Psoas muscle (tissue), 8 donors: ENCODE measurements at regions of chr11 and their contacts with region 1.

Region 1: DNA sequence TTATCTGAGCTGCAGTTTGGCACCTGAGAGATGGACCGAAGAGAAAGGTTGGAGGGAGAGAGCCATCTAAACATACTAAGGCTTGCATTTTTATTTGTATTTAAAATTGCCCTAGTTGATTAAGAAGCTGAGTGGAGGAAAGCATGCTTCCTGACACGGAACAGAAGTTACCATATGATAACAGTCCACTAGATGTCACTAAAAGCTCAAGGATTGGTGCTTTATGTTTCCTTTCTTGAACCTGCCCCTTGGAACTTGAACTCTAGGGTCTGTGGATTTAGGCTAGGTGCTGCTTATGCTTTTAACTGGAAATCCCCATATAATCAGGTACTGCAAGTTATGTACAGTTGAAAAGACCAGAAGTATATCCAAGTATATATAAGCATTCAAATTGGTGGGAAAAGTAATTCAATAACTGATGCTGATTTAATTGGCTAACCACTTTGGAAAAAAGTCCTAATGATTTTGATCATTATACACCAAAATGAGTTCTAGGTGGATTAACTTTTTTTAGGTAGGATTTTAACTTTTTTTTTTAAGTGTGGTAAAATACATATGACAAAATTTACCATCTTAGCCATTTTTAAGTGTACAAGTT is 9.5 kb downstream of the RBMXL2 start:
- DNase-seq: no peak
- ATAC-seq: peak; percentile 51 to 83 (median 58)
- H3K4me3 ChIP-seq: no peak overlapping the region
- H3K27ac ChIP-seq: no peak overlapping the region
- H3K4me1 ChIP-seq: no peaks in the 10 kb centered on the region
- H3K27me3 ChIP-seq: peaks cover 0 to 3% (median 0%) of the 10 kb centered on the region in 3 donors
- CTCF ChIP-seq: peak; percentile 62

Region 2: GRCh38 chr11:7292922-7293321 is 194.6 kb after region 1 on chr11:
- intact Hi-C with region 1: no loop called
- DNase-seq: no peak
- ATAC-seq: no peak
- H3K4me3 ChIP-seq: no peak overlapping the region
- H3K27ac ChIP-seq: no peak overlapping the region
- H3K4me1 ChIP-seq: no peaks in the 10 kb centered on the region
- H3K27me3 ChIP-seq: peaks cover 0 to 2% (median 0%) of the 10 kb centered on the region in 3 donors
- CTCF ChIP-seq: no peak

Region 3: DNA sequence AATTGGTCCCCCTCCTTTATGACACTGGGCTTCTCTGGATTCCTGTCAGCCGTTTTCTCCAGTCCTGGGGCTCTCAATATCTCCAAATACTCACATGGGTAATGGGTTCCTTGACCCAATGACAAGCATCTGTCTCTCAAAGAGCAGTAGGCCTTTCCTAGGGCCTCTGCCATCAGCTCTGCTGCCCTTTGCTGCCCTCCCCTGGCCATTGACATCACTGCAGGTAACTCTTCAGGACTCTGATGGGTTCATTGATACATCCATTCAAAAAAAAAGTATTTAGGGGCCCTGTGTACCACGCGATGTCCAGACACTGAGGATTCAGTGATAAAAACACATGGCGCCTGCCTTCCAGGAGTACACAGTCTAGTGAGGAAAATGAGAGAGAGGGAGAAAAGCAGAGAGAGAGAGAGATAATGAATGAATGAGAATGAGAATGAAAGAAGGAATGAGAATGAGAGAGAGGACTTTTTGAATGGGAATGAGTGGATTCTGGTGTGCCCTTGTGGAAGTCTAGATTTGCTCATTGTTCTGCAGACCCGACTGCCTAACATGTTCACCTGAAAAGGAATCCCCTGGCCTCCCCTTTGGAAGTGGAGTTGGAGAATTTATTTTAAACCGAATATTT is 344.4 kb after region 1 on chr11:
- intact Hi-C with region 1: loop called (anchors 2 to 5 kb)
- DNase-seq: peak; percentile 67 to 81
- ATAC-seq: peak in 3 of 4 donors; percentile 70 to 87 (median 83)
- H3K4me3 ChIP-seq: no peak overlapping the region
- H3K27ac ChIP-seq: no peak overlapping the region
- H3K4me1 ChIP-seq: no peaks in the 10 kb centered on the region
- H3K27me3 ChIP-seq: no peaks in the 10 kb centered on the region
- CTCF ChIP-seq: peak; percentile 81

Region 4: DNA sequence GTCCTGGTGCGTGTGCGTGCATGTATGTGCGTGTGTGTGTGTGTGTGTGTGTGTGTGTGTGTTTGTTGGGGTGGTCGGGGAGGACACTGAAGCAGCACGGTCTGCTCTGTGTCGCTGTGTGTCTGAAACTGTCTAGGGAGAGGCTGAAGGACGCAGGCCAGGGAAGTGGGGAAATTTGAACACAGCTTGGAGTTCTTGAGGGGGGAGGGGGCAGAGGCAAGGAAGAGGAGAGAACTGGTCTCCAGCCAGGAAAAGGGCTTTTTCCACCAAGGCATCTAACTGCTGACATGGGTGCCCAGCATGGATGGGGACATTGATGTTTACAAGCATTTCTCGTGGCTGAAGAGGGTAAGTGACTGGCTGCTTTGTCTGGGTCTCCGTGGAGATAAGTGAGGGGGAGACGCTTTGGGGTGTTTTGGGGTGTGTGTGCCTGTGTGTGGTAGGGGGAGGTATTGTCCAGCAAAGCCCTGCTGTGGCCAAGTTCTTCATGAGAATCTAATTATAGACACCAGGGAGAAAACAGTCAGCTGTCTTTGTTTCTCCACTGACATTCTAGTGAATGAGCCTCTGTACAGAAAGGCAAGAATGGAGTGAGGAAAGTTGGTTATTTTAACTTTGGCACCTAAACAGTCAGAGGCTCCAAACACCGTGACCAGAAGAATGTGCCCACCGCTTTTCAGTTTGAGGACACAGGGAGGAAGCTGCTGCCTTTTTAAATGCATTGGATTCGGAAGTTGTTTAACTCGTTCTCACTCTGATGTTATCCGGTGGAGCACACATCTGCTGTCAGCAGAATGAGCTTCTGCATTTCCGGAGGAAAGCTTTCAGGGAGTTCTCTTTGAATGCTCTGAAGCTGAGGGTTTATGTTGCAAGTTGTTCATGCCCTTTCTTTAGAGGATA is 479.2 kb after region 1 on chr11:
- intact Hi-C with region 1: no loop called
- DNase-seq: peak; percentile 65 to 72
- ATAC-seq: peak; percentile 66 to 78 (median 74)
- H3K4me3 ChIP-seq: peak overlapping the region; percentile 64
- H3K27ac ChIP-seq: peak overlapping the region; percentile 90
- H3K4me1 ChIP-seq: peaks cover 74% of the 10 kb centered on the region
- H3K27me3 ChIP-seq: no peaks in the 10 kb centered on the region
- CTCF ChIP-seq: no peak

Region 5: DNA sequence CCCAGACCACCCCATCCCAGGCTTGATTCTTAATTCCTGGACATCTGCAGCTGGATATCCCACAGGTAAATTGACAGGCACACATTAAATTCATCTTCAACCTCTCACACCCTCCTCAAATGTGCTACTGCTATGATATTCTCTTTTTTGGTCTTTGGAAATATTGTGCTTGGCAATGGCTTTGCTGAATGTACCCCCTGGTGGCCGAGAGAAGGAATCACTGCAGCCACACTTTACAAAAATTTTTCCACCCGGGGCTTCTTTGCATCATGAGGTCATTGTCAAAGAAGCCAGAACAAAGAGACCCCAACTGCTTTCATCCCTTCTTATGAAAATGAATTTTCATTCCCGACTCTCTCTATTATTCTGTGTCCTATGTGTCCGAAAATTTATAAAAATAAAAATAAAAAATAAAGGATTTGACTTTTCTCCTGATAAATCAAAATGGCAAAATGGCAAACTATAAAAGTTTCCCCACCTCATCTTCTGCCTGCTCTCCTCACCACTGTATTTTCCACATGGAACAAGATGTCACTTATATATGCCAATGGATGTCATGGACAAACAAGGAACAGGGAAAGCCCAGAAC is 590.0 kb after region 1 on chr11:
- intact Hi-C with region 1: loop called in 1 of 2 experiments (anchors 5 kb)
- DNase-seq: no peak
- ATAC-seq: no peak
- H3K4me3 ChIP-seq: no peak overlapping the region
- H3K27ac ChIP-seq: no peak overlapping the region
- H3K4me1 ChIP-seq: peaks cover 10% of the 10 kb centered on the region
- H3K27me3 ChIP-seq: no peaks in the 10 kb centered on the region
- CTCF ChIP-seq: peak; percentile 65

Region 6: DNA sequence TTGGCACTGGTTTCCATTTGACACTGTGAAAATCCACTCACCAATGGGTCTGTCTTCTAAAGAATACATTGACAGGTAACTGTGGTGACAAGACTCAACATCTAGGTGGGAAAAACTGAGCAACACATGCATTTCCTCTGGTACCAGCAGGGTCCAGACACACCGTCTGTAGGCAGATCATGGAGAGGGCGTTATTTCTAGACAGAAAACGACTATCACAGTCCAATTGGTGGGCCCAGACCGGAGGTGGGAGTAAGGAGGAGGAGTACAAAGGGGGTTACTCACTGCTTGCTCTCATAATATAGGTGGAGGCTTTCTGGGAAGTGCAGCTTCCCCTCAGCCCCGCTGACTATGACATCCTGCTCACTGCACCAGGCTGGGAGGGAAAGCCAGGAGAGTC is 598.1 kb after region 1 on chr11:
- intact Hi-C with region 1: loop called in 1 of 2 experiments (anchors 5 kb)
- DNase-seq: no peak
- ATAC-seq: no peak
- H3K4me3 ChIP-seq: no peak overlapping the region
- H3K27ac ChIP-seq: no peak overlapping the region
- H3K4me1 ChIP-seq: peaks cover 10% of the 10 kb centered on the region
- H3K27me3 ChIP-seq: no peaks in the 10 kb centered on the region
- CTCF ChIP-seq: no peak

Region 7: GRCh38 chr11:7986768-7987559 is 888.6 kb after region 1 on chr11 and contains the start of gene EIF3F:
- intact Hi-C with region 1: loop called (anchors 5 to 10 kb)
- DNase-seq: peak; percentile 84 to 91
- ATAC-seq: peak; percentile 100
- H3K4me3 ChIP-seq: peak within 1 kb of the TSS; percentile 76
- H3K27ac ChIP-seq: peak within 1 kb of the TSS; percentile 80
- H3K4me1 ChIP-seq: peaks cover 28% of the 10 kb centered on the region
- H3K27me3 ChIP-seq: no peaks in the 10 kb centered on the region
- CTCF ChIP-seq: peak; percentile 85
- total RNA-seq, gene EIF3F: 149 to 208 (median 202) TPM

Region 8: DNA sequence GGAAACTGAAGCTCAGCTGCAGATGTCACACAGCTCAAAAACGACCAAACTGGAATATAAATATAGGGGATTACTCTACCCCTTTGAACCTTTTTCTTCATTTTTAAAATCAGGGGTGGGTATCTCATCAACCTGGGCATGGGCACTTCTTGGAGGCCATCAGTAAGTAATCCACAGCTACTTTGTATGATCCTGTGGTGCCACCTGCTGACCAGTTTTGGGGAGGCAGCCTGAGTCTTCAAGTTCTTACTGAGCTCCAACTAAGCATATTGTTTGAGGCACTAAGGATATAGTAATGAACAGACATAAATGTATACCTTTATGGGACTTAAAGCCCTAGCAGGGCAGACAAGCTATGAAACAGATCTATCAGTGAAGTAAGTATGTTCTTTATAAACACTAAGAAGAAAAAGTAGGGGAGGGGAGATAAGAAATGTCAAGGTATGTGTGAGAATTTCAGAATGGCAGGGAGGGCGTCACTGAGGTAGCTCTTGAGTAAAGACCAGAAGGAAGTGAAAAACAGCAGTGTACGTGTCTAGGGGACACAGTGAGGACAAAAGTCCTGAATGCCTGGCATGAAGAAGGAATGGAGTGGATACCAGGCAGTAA is 1001.1 kb after region 1 on chr11:
- intact Hi-C with region 1: loop called in 1 of 2 experiments (anchors 5 kb)
- DNase-seq: peak; percentile 77 to 85
- ATAC-seq: peak; percentile 73 to 91 (median 76)
- H3K4me3 ChIP-seq: no peak overlapping the region
- H3K27ac ChIP-seq: no peak overlapping the region
- H3K4me1 ChIP-seq: no peaks in the 10 kb centered on the region
- H3K27me3 ChIP-seq: no peaks in the 10 kb centered on the region
- CTCF ChIP-seq: peak; percentile 83